B cell (primary cell): ENCODE measurements at regions of chr1 and their contacts with region 1.

Region 1: GRCh38 chr1:32240140-32240951 is 6.7 kb upstream of the FAM167B start:
- DNase-seq: peak; percentile 75
- ATAC-seq: peak; percentile 79
- H3K4me3 ChIP-seq: peak overlapping the region; percentile 50 to 77 (median 69)
- H3K4me3 Mint-ChIP-seq: peak overlapping the region; percentile 95
- H3K27ac ChIP-seq: peak overlapping the region; percentile 4 to 61
- H3K27ac Mint-ChIP-seq: peak overlapping the region; percentile 93
- H3K4me1 ChIP-seq: peaks cover 16 to 31% of the 10 kb centered on the region in 2 donors
- H3K4me1 Mint-ChIP-seq: peaks cover 20% of the 10 kb centered on the region
- H3K27me3 ChIP-seq: no peaks in the 10 kb centered on the region
- H3K27me3 Mint-ChIP-seq: no peaks in the 10 kb centered on the region
- CTCF ChIP-seq: peak; percentile 30

Region 2: DNA sequence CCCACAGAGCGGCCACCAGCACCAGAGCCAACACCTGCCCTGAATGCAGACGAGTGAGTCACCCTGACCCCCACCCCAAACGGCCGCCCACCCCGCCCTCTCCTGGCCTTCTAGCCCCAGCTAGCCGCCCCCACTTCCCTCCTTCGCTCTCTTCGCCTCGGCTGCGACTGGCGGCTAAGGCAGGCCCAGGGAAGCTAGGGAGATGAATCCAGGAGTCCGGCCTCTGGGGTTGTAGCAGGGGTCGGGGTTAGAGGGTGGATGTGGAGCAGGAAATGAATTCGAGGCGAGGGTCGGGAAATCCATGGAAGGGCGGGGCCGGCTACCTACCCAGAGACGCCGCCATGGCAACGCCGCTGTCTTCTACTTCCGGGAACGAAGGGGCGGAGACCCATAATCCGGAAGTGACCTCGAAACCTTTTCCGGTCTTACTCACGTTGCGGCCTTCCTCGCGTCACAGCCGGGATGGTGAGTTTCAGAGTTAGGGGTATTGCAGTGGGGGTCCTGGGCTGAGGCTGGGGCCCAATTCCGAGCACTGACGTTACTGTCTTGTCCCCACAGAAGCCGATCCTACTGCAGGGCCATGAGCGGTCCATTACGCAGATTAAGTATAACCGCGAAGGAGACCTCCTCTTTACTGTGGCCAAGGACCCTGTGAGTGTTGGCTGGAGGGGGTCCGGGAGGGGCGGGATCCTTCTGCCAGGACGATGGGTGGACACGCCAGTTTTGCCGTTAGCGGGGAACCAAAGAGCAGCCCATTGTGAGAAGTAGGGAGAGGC is 18.2 kb before region 1 on chr1 and contains the starts of genes EIF3I and TMEM234:
- CTCF ChIA-PET with region 1: interaction called, 49 read pairs
- POLR2A ChIA-PET with region 1: interaction called, 9 read pairs
- intact Hi-C with region 1: loop called (anchors 1 kb)
- DNase-seq: peak; percentile 94
- ATAC-seq: peak; percentile 86
- H3K4me3 ChIP-seq: peak within 1 kb of the TSS; percentile 61 to 99 (median 93)
- H3K4me3 Mint-ChIP-seq: peak within 1 kb of the TSS; percentile 97
- H3K27ac ChIP-seq: peak within 1 kb of the TSS; percentile 72 to 94
- H3K27ac Mint-ChIP-seq: peak within 1 kb of the TSS; percentile 98
- H3K4me1 ChIP-seq: peaks cover 28 to 30% of the 10 kb centered on the region in 2 donors
- H3K4me1 Mint-ChIP-seq: peaks cover 43% of the 10 kb centered on the region
- H3K27me3 ChIP-seq: no peaks in the 10 kb centered on the region
- H3K27me3 Mint-ChIP-seq: no peaks in the 10 kb centered on the region
- CTCF ChIP-seq: no peak
- total RNA-seq, gene EIF3I: 87.0 and 91.0 TPM in 2 replicates
- total RNA-seq, gene TMEM234: 50.4 and 60.8 TPM in 2 replicates

Region 3: GRCh38 chr1:32266921-32267591 is 26.7 kb after region 1 on chr1:
- CTCF ChIA-PET with region 1: interaction called, 9 read pairs
- POLR2A ChIA-PET with region 1: interaction called, 10 read pairs
- intact Hi-C with region 1: no loop called
- DNase-seq: no peak
- ATAC-seq: no peak
- H3K4me3 ChIP-seq: no peak overlapping the region
- H3K4me3 Mint-ChIP-seq: no peak overlapping the region
- H3K27ac ChIP-seq: no peak overlapping the region
- H3K27ac Mint-ChIP-seq: peak overlapping the region; percentile 74
- H3K4me1 ChIP-seq: peaks cover 22 to 28% of the 10 kb centered on the region in 2 donors
- H3K4me1 Mint-ChIP-seq: peaks cover 27% of the 10 kb centered on the region
- H3K27me3 ChIP-seq: no peaks in the 10 kb centered on the region
- H3K27me3 Mint-ChIP-seq: no peaks in the 10 kb centered on the region
- CTCF ChIP-seq: no peak

Region 4: GRCh38 chr1:32307323-32307722 is 67.0 kb after region 1 on chr1:
- CTCF ChIA-PET with region 1: interaction called, 26 read pairs
- POLR2A ChIA-PET with region 1: interaction called, 7 read pairs
- intact Hi-C with region 1: no loop called
- DNase-seq: no peak
- ATAC-seq: no peak
- H3K4me3 ChIP-seq: no peak overlapping the region
- H3K4me3 Mint-ChIP-seq: peak overlapping the region; percentile 0
- H3K27ac ChIP-seq: peak overlapping the region; percentile 24 to 72
- H3K27ac Mint-ChIP-seq: peak overlapping the region; percentile 78
- H3K4me1 ChIP-seq: peaks cover 42 to 44% of the 10 kb centered on the region in 2 donors
- H3K4me1 Mint-ChIP-seq: peaks cover 57% of the 10 kb centered on the region
- H3K27me3 ChIP-seq: no peaks in the 10 kb centered on the region
- H3K27me3 Mint-ChIP-seq: no peaks in the 10 kb centered on the region
- CTCF ChIP-seq: no peak

Region 5: GRCh38 chr1:32400876-32401631 is 160.7 kb after region 1 on chr1:
- CTCF ChIA-PET with region 1: interaction called, 10 read pairs
- POLR2A ChIA-PET with region 1: no interaction called
- intact Hi-C with region 1: no loop called
- DNase-seq: peak; percentile 64
- ATAC-seq: peak; percentile 69
- H3K4me3 ChIP-seq: no peak overlapping the region
- H3K4me3 Mint-ChIP-seq: peak overlapping the region; percentile 13
- H3K27ac ChIP-seq: no peak overlapping the region
- H3K27ac Mint-ChIP-seq: no peak overlapping the region
- H3K4me1 ChIP-seq: peaks cover 0 to 3% of the 10 kb centered on the region in 2 donors
- H3K4me1 Mint-ChIP-seq: peaks cover 2% of the 10 kb centered on the region
- H3K27me3 ChIP-seq: no peaks in the 10 kb centered on the region
- H3K27me3 Mint-ChIP-seq: peaks cover 3% of the 10 kb centered on the region
- CTCF ChIP-seq: peak; percentile 79

Region 6: GRCh38 chr1:32508751-32509140 is 268.4 kb after region 1 on chr1:
- CTCF ChIA-PET with region 1: no interaction called
- POLR2A ChIA-PET with region 1: no interaction called
- intact Hi-C with region 1: no loop called
- DNase-seq: no peak
- ATAC-seq: no peak
- H3K4me3 ChIP-seq: no peak overlapping the region
- H3K4me3 Mint-ChIP-seq: no peak overlapping the region
- H3K27ac ChIP-seq: no peak overlapping the region
- H3K27ac Mint-ChIP-seq: no peak overlapping the region
- H3K4me1 ChIP-seq: no peaks in the 10 kb centered on the region
- H3K4me1 Mint-ChIP-seq: no peaks in the 10 kb centered on the region
- H3K27me3 ChIP-seq: peaks cover 0 to 6% (median 0%) of the 10 kb centered on the region in 4 experiments
- H3K27me3 Mint-ChIP-seq: peaks cover 37% of the 10 kb centered on the region
- CTCF ChIP-seq: no peak

Region 7: DNA sequence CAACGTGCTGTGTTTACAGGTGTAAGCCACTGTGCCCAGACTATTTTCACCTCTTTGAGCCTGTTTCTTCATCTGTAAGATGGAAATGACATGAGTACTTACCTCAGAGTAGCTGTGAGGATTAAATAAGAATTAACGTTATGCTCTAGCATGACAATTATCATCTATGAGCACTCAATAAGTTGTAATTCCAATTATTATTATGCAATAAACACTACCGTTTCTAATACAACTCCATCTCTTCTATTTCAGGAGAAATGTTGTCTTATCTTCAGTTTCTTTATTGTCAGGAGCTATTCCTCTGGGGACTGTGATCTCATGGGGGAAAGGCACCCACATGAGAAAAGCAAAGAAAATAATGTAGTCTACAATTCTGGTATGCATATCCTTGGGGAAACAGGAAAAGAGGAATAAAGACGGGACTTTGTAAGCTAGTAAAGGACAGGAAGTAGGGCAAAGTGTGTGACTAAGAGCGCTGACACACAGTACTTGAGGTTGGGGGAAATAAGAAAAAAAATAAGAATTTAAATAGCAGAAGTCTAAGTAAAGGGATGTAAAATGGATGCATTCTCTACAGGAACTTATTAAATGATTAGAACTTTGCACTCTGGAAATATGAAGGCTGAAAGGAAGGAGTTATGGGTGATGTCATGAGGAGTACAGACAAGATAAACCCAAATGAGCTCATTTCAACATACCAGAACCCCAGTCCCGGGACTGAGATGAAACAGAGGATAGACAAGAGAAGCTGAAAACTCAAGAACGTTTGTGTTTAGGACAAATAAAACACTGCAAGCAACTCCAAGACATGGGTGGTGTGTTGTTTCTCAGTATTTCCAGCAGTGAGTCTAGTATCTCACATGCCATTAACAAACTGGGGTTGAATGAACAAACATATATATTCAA is 1180.8 kb after region 1 on chr1:
- CTCF ChIA-PET with region 1: no interaction called
- POLR2A ChIA-PET with region 1: no interaction called
- intact Hi-C with region 1: no loop called
- DNase-seq: no peak
- ATAC-seq: no peak
- H3K4me3 ChIP-seq: no peak overlapping the region
- H3K4me3 Mint-ChIP-seq: no peak overlapping the region
- H3K27ac ChIP-seq: no peak overlapping the region
- H3K27ac Mint-ChIP-seq: no peak overlapping the region
- H3K4me1 ChIP-seq: no peaks in the 10 kb centered on the region
- H3K4me1 Mint-ChIP-seq: no peaks in the 10 kb centered on the region
- H3K27me3 ChIP-seq: peaks cover 0 to 6% (median 0%) of the 10 kb centered on the region in 4 experiments
- H3K27me3 Mint-ChIP-seq: peaks cover 36% of the 10 kb centered on the region
- CTCF ChIP-seq: no peak